ENCODE measurements at regions of chr5 and their contacts with region 1.

Region 1: DNA sequence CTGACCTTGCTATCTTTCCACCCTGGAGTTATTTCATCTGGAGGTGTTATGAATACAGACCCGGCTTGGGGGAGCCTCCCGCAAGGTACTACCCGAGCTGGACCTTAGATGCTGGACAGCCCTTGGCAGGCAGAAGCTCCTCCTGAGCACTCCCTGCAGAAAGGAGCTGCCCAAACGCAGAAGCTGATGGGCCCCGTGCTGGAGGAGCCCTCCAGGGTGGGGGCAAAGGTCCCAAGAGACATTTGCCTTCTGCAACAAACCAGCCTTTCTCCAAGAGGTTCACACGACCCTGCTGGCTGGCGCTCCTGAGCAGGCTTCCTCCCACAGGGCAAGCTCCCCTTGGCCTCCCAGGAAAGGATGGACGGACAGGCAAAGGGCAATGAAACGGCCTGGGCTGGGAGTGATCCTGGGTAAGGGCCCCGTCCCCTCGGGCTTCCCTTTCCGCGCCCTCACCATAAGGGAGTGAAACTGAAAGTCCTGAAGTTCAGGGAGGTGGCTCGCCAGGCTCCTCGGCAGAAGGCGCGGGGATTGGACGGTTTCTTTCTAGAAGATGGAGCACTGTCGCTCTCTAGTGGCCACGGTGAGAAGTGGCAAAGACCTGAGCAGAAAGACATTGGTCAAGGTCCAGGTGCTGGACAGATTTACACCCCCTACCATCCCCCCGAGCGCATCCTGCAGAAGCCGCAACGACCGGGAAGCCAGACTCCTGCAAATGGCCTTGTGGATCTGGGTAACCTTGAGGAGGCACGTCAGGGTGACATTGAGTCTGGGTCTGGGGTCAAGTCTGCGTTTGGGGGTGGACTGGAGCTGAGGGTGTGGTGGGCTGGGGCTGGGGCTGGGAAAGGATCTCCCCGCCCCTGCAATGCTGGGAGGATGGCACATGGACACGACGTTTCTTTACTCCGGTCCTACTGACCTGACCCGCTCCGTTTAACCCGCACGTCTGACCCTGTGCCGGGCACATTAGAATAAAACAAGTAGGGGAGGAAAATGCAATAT is 56.4 kb downstream of the NEURL1B start:
- DNase-seq: peak; percentile 80 to 84
- ATAC-seq: peak; percentile 83 to 90
- H3K4me3 ChIP-seq: peak overlapping the region; percentile 43
- H3K27ac ChIP-seq: peak overlapping the region; percentile 67 to 81
- H3K4me1 ChIP-seq: peaks cover 8% of the 10 kb centered on the region; the same call in 2 of the 3 replicates
- CTCF ChIP-seq: peak; percentile 92
- EP300 ChIP-seq: no peak
- POLR2A ChIP-seq: no peak
- RAD21 ChIP-seq: peak; percentile 98 to 99

Region 2: GRCh38 chr5:172473427-172473826 is 224.0 kb before region 1 on chr5:
- CTCF ChIA-PET with region 1: interaction called, 198 read pairs
- POLR2A ChIA-PET with region 1: no interaction called
- DNase-seq: no peak
- ATAC-seq: no peak
- H3K4me3 ChIP-seq: no peak overlapping the region
- H3K27ac ChIP-seq: no peak overlapping the region
- H3K4me1 ChIP-seq: no peaks in the 10 kb centered on the region
- CTCF ChIP-seq: no peak
- EP300 ChIP-seq: no peak
- POLR2A ChIP-seq: no peak
- RAD21 ChIP-seq: no peak

Region 3: GRCh38 chr5:172496671-172497371 is 200.6 kb before region 1 on chr5:
- CTCF ChIA-PET with region 1: interaction called, 11 read pairs
- POLR2A ChIA-PET with region 1: no interaction called
- DNase-seq: no peak
- ATAC-seq: peak in 1 of 2 experiments; percentile 22; a peak in 1 of 6 replicates
- H3K4me3 ChIP-seq: no peak overlapping the region
- H3K27ac ChIP-seq: no peak overlapping the region
- H3K4me1 ChIP-seq: no peaks in the 10 kb centered on the region
- CTCF ChIP-seq: no peak
- EP300 ChIP-seq: no peak
- POLR2A ChIP-seq: no peak
- RAD21 ChIP-seq: no peak

Region 4: DNA sequence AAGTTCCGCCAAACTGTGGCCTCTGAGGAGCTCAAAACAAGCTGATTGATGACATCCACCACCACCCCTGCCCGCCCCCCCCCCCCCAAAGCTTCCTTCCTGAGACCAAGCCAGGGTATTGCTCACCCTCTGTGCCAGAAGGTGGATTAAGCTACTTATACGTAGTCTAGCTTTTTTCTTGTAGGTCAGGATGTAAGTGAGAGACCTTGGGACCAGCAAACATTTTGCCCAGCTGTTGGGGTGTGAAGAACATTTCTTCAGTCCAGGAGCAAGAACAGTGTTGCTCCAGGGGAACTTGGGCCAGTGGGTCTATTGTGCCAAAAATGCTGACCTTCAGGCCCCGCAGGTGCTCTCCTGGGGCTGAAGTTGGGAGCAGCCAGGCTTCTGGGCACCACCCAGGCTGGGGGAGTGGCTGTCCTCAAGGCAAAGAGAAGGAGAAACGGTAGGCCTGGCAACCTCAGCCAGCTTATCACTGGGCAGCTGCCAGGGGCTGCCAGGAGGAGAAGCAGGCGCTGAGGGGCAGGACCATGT is 38.4 kb before region 1 on chr5:
- CTCF ChIA-PET with region 1: interaction called, 11 read pairs
- POLR2A ChIA-PET with region 1: no interaction called
- DNase-seq: no peak
- ATAC-seq: 0 out of 6 replicates have a peak, but pooled peaks of 1 of the 2 experiments have one; percentile 15
- H3K4me3 ChIP-seq: no peak overlapping the region
- H3K27ac ChIP-seq: peak overlapping the region in 1 of 2 experiments; percentile 68; a peak in 3 of 6 replicates
- H3K4me1 ChIP-seq: peaks cover 15% of the 10 kb centered on the region
- CTCF ChIP-seq: no peak
- EP300 ChIP-seq: no peak
- POLR2A ChIP-seq: no peak
- RAD21 ChIP-seq: no peak

Region 5: DNA sequence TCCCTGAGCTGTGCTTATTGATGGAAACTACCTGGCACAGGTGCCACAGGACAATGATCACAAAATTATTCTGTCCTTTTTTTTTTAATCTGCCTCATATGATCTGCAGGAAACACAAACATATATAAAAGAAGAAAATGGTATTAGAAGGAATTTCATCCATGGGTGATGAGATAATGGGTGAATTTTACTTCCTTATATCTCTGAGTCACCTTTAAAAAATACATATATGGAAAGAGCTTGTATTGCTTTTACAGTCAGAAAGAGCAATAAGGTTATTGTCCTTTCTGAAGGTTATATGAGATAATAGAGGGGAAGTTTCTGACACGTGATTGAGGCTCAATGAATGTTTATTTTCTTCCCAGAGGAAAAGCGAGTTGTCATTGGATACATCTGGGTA is 24.7 kb before region 1 on chr5:
- CTCF ChIA-PET with region 1: interaction called, 22 read pairs
- POLR2A ChIA-PET with region 1: no interaction called
- DNase-seq: no peak
- ATAC-seq: no peak
- H3K4me3 ChIP-seq: no peak overlapping the region
- H3K27ac ChIP-seq: no peak overlapping the region
- H3K4me1 ChIP-seq: no peaks in the 10 kb centered on the region
- CTCF ChIP-seq: no peak
- EP300 ChIP-seq: no peak
- POLR2A ChIP-seq: no peak
- RAD21 ChIP-seq: no peak

Measured in A549 (cell line).